GM12878 (cell line): ENCODE measurements at regions of chr4 and their contacts with region 1.

Region 1: GRCh38 chr4:169249214-169249973 is 21.4 kb downstream of the SH3RF1 start:
- DNase-seq: no peak
- ATAC-seq: peak; percentile 72
- H3K4me3 ChIP-seq: no peak overlapping the region
- H3K27ac ChIP-seq: no peak overlapping the region
- H3K4me1 ChIP-seq: no peaks in the 10 kb centered on the region; the same call in 1 of the 2 replicates
- H3K27me3 ChIP-seq: no peaks in the 10 kb centered on the region
- CTCF ChIP-seq: no peak
- EP300 ChIP-seq: no peak
- POLR2A ChIP-seq: no peak
- RAD21 ChIP-seq: no peak

Region 2: DNA sequence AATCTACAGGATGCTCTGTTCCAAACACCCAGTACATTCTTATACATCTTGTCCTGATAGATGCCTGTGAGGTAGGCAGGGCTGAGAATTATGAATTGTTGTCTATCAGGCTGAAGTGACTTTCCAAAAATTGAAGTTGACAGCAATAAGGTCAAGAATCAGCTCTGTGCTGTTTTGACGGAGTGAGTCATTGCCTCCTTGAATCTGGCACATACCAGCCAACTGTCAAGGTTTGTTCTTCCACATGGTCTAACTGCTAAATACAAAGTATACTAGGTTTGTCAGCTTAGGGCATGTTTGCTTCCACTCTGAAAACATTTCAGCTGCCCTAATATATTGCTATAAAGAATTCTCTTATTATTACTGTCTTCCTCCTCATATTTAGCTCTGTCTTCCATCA is 10.9 kb before region 1 on chr4:
- CTCF ChIA-PET with region 1: interaction called, 7 read pairs
- POLR2A ChIA-PET with region 1: interaction called, 5 read pairs
- RAD21 ChIA-PET with region 1: no interaction called
- SMC1A ChIA-PET with region 1: interaction called, 29 read pairs
- in situ Hi-C with region 1: no loop called
- intact Hi-C with region 1: no loop called
- DNase-seq: no peak
- ATAC-seq: no peak
- H3K4me3 ChIP-seq: no peak overlapping the region
- H3K27ac ChIP-seq: no peak overlapping the region
- H3K4me1 ChIP-seq: no peaks in the 10 kb centered on the region
- H3K27me3 ChIP-seq: no peaks in the 10 kb centered on the region
- CTCF ChIP-seq: no peak
- EP300 ChIP-seq: no peak
- POLR2A ChIP-seq: no peak
- RAD21 ChIP-seq: no peak

Region 3: GRCh38 chr4:169260217-169260866 is 10.9 kb after region 1 on chr4:
- CTCF ChIA-PET with region 1: interaction called, 14 read pairs
- POLR2A ChIA-PET with region 1: interaction called, 3 read pairs
- RAD21 ChIA-PET with region 1: interaction called, 64 read pairs
- SMC1A ChIA-PET with region 1: interaction called, 102 read pairs
- in situ Hi-C with region 1: no loop called
- intact Hi-C with region 1: no loop called
- DNase-seq: no peak
- ATAC-seq: peak; percentile 40
- H3K4me3 ChIP-seq: no peak overlapping the region; the same call in 1 of the 2 replicates
- H3K27ac ChIP-seq: no peak overlapping the region
- H3K4me1 ChIP-seq: no peaks in the 10 kb centered on the region
- H3K27me3 ChIP-seq: no peaks in the 10 kb centered on the region
- CTCF ChIP-seq: no peak
- EP300 ChIP-seq: no peak
- POLR2A ChIP-seq: no peak
- RAD21 ChIP-seq: no peak

Region 4: GRCh38 chr4:169446824-169447223 is 197.4 kb after region 1 on chr4:
- CTCF ChIA-PET with region 1: no interaction called
- POLR2A ChIA-PET with region 1: no interaction called
- RAD21 ChIA-PET with region 1: no interaction called
- SMC1A ChIA-PET with region 1: no interaction called
- in situ Hi-C with region 1: no loop called
- intact Hi-C with region 1: no loop called
- DNase-seq: no peak
- ATAC-seq: no peak
- H3K4me3 ChIP-seq: no peak overlapping the region
- H3K27ac ChIP-seq: no peak overlapping the region
- H3K4me1 ChIP-seq: no peaks in the 10 kb centered on the region
- H3K27me3 ChIP-seq: no peaks in the 10 kb centered on the region
- CTCF ChIP-seq: no peak
- EP300 ChIP-seq: no peak
- POLR2A ChIP-seq: no peak
- RAD21 ChIP-seq: no peak